ENCODE measurements at regions of chr17 and their contacts with region 1.

Region 1: GRCh38 chr17:65055348-65056261 is 935 bp downstream of the GNA13 start:
- DNase-seq: peak; percentile 55
- H3K4me3 Mint-ChIP-seq: peak overlapping the region; percentile 89
- H3K27ac Mint-ChIP-seq: peak overlapping the region; percentile 72
- H3K4me1 Mint-ChIP-seq: peaks cover 31% of the 10 kb centered on the region
- H3K27me3 Mint-ChIP-seq: no peaks in the 10 kb centered on the region
- CTCF ChIP-seq: no peak

Region 2: GRCh38 chr17:64938925-64939474 is 116.6 kb before region 1 on chr17:
- CTCF ChIA-PET with region 1: no interaction called
- POLR2A ChIA-PET with region 1: no interaction called
- intact Hi-C with region 1: no loop called
- DNase-seq: peak; percentile 37
- H3K4me3 Mint-ChIP-seq: no peak overlapping the region
- H3K27ac Mint-ChIP-seq: no peak overlapping the region
- H3K4me1 Mint-ChIP-seq: no peaks in the 10 kb centered on the region
- H3K27me3 Mint-ChIP-seq: no peaks in the 10 kb centered on the region
- CTCF ChIP-seq: peak; percentile 42

Region 3: DNA sequence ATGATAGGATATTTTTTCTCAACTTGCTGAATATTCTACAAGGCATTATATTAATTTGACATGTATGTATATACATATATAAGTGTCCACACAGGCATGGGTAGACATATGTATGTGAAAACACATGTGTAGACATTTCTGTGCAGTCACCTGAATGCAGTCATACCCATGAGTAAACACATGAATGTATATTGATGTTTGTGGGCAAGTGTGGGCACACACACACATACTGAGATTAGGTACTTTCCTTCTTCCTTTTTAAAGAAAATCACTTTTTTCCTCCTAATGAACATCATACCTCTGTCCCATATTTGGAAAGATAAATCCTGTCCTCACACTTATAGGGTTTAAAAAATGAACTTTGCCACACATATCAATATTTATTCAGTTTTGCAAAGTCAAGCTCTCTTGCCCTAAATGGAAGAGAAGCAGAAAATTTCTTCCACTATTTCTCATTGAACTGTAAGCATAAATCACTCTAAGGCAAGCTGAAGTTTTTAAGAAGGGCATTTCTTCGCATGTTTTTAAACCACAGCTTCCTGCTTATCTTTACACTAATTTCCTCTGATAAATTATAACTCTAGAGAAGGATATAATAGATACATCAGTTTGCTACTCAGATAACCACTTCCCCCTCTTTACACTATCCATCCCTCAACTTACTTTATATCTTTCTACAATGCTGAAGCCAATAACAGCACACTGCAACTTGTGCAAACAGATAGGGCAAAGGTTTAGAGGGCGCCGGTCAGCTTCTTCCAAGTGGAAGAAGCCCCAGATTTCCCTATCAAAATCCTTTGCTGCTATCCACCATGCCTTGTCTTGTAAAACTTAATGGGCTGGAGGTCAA is 86.7 kb before region 1 on chr17:
- CTCF ChIA-PET with region 1: no interaction called
- POLR2A ChIA-PET with region 1: interaction called, 103 read pairs
- intact Hi-C with region 1: loop called (anchors 5 kb)
- DNase-seq: no peak
- H3K4me3 Mint-ChIP-seq: no peak overlapping the region
- H3K27ac Mint-ChIP-seq: no peak overlapping the region
- H3K4me1 Mint-ChIP-seq: no peaks in the 10 kb centered on the region
- H3K27me3 Mint-ChIP-seq: no peaks in the 10 kb centered on the region
- CTCF ChIP-seq: no peak

Region 4: DNA sequence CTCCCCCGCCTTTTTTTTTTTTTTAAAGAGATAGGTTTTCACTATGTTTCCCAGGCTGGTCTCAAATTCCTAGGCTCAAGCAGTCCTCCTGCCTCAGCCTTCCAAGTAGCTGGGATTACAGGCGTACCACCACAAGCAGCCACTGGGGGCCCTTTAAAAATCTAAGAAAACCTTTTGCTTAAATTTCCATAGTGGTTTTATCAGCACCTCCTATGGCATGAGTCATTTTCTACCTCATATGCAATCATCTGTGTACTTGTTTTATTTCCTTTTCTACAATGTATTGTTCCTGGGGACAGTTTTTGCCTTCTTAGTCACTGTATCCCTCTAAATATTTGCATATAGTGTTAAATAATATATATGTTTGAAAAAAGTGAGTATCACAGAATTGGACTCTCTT is 28.3 kb before region 1 on chr17:
- CTCF ChIA-PET with region 1: interaction called, 5 read pairs
- POLR2A ChIA-PET with region 1: interaction called, 55 read pairs
- intact Hi-C with region 1: loop called (anchors 2 kb)
- DNase-seq: peak; percentile 72
- H3K4me3 Mint-ChIP-seq: no peak overlapping the region
- H3K27ac Mint-ChIP-seq: peak overlapping the region; percentile 42
- H3K4me1 Mint-ChIP-seq: peaks cover 38% of the 10 kb centered on the region
- H3K27me3 Mint-ChIP-seq: no peaks in the 10 kb centered on the region
- CTCF ChIP-seq: peak; percentile 36

Region 5: DNA sequence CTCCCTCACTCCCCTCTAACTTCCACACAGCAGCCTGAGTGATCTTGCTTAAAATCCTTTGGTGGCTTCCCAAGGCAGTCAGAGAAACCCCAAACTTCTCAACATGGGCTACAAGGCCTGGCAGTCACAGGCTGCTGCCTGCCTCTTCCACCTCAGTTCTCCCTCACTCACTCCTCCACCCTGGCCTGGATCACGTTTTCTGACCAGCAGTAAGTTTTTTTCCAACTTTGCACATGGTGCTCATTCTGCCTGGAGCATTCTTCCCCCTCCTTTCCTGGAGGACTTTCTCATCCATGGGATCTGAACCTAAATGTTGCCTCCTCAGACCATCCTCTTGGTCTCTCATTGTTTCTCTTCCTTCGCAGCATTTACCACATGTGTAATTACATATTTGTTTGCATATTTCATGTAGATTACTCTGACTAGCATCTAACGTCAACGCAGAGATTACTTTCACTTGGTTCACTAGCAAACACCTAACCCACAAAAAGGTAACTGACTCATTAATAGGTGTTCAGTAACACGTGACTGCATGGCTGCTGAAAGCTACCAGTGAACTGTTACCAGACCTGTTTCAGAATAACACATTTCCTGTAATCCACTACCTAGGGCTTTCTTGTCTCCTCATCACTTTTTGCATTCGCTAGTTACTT is 16.1 kb before region 1 on chr17:
- CTCF ChIA-PET with region 1: no interaction called
- POLR2A ChIA-PET with region 1: interaction called, 30 read pairs
- intact Hi-C with region 1: no loop called
- DNase-seq: peak; percentile 52
- H3K4me3 Mint-ChIP-seq: peak overlapping the region; percentile 49
- H3K27ac Mint-ChIP-seq: peak overlapping the region; percentile 46
- H3K4me1 Mint-ChIP-seq: peaks cover 40% of the 10 kb centered on the region
- H3K27me3 Mint-ChIP-seq: no peaks in the 10 kb centered on the region
- CTCF ChIP-seq: no peak

Region 6: GRCh38 chr17:65108152-65108551 is 52.5 kb after region 1 on chr17:
- CTCF ChIA-PET with region 1: interaction called, 4 read pairs
- POLR2A ChIA-PET with region 1: interaction called, 256 read pairs
- intact Hi-C with region 1: no loop called
- DNase-seq: no peak
- H3K4me3 Mint-ChIP-seq: no peak overlapping the region
- H3K27ac Mint-ChIP-seq: peak overlapping the region; percentile 67
- H3K4me1 Mint-ChIP-seq: peaks cover 35% of the 10 kb centered on the region
- H3K27me3 Mint-ChIP-seq: no peaks in the 10 kb centered on the region
- CTCF ChIP-seq: no peak

Region 7: GRCh38 chr17:65191811-65192740 is 136.5 kb after region 1 on chr17:
- CTCF ChIA-PET with region 1: no interaction called
- POLR2A ChIA-PET with region 1: no interaction called
- intact Hi-C with region 1: loop called (anchors 5 kb)
- DNase-seq: peak; percentile 70
- H3K4me3 Mint-ChIP-seq: no peak overlapping the region
- H3K27ac Mint-ChIP-seq: no peak overlapping the region
- H3K4me1 Mint-ChIP-seq: peaks cover 6% of the 10 kb centered on the region
- H3K27me3 Mint-ChIP-seq: no peaks in the 10 kb centered on the region
- CTCF ChIP-seq: no peak

Region 8: DNA sequence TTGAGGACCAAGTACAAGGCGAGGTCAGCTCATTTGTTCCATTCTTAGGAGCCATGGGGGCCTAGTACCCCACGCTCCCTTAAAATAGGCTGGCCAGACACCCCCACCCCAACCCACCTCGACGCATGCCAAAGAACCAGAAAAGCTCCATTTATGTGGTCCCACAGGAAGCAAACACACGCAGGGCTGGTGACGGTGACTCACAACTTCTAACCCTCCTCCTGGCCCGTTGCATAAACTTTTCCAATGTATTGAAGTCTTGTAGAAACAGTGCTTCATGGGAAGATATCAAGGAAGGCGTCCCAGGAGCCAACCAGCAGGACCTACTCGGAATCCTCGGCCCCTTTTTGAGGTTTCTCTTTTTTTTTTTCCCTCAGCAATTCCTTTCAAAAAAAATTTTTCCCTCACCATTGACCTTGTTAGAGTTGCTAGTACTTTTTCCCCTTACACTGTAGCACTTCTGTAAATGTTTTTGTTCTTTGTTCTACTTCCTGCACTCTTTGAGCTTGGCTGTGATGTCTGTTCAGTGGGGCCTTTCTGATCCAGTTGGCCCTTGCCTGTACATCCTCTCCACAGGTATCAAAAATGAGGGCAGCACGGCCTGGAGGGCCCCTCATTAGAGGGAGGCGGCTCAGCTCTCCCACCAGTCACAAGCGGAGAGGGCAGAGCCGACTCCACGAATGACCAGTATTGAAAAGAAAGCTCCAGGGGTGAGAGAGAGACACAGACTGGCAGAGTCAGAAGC is 289.8 kb after region 1 on chr17:
- CTCF ChIA-PET with region 1: no interaction called
- POLR2A ChIA-PET with region 1: no interaction called
- intact Hi-C with region 1: no loop called
- DNase-seq: peak; percentile 4
- H3K4me3 Mint-ChIP-seq: no peak overlapping the region
- H3K27ac Mint-ChIP-seq: no peak overlapping the region
- H3K4me1 Mint-ChIP-seq: no peaks in the 10 kb centered on the region
- H3K27me3 Mint-ChIP-seq: no peaks in the 10 kb centered on the region
- CTCF ChIP-seq: no peak